SK-N-SH (cell line): ENCODE measurements at regions of chr13 and their contacts with region 1.

Region 1: DNA sequence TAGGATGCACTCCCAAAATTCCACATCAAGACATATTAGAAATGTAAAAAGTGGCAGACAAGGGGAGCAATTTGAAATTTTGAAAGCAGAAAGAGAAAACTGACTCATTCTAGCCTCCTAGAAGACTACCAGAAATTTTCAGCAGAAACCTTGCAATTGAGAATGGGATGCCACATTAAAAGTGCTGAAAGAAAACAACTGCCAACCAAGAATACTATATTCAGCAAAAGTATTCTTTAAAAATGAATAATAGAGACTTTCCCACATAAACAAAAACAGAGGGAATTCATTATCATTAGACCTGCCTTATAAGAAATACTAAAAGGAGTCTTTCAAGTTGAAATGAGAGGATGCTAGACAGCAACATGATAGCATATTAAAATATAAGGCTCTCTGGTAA is 78.3 kb upstream of the HTR2A start:
- DNase-seq: no peak
- H3K4me3 ChIP-seq: no peak overlapping the region
- H3K27ac ChIP-seq: no peak overlapping the region
- H3K4me1 ChIP-seq: no peaks in the 10 kb centered on the region
- H3K27me3 ChIP-seq: no peaks in the 10 kb centered on the region
- CTCF ChIP-seq: no peak
- EP300 ChIP-seq: no peak
- RAD21 ChIP-seq: no peak

Region 2: DNA sequence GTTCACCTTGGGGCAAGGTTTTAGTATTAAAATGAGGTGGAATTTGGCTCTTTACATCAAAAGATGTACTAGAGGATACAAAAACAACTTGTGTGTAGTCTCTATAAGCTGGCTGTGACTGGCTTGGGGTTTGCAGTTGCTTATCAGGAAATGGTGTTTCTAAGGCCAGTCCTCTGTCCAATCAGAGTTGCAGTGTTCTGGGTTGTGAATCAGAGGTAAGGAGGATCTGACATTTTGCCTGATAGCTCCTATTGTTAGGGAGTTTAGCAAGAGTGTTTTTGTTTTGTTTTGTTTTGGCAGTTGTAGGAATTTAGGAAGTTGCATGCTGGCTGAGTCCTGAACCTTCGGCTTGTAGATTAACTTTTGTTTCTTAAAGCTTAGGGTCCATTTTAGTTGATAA is 158.1 kb before region 1 on chr13:
- CTCF ChIA-PET with region 1: no interaction called
- POLR2A ChIA-PET with region 1: no interaction called
- DNase-seq: no peak
- H3K4me3 ChIP-seq: no peak overlapping the region
- H3K27ac ChIP-seq: no peak overlapping the region
- H3K4me1 ChIP-seq: no peaks in the 10 kb centered on the region
- H3K27me3 ChIP-seq: no peaks in the 10 kb centered on the region
- CTCF ChIP-seq: no peak
- EP300 ChIP-seq: no peak
- RAD21 ChIP-seq: no peak

Region 3: GRCh38 chr13:46961719-46962118 is 13.5 kb before region 1 on chr13:
- CTCF ChIA-PET with region 1: interaction called, 14 read pairs
- POLR2A ChIA-PET with region 1: no interaction called
- DNase-seq: no peak
- H3K4me3 ChIP-seq: no peak overlapping the region
- H3K27ac ChIP-seq: peak overlapping the region in 1 of 2 experiments; percentile 56; a peak in 2 of 4 replicates
- H3K4me1 ChIP-seq: peaks cover 0 to 4% of the 10 kb centered on the region in 2 experiments; a peak in 1 of 4 replicates
- H3K27me3 ChIP-seq: no peaks in the 10 kb centered on the region
- CTCF ChIP-seq: no peak
- EP300 ChIP-seq: no peak
- RAD21 ChIP-seq: no peak

Region 4: DNA sequence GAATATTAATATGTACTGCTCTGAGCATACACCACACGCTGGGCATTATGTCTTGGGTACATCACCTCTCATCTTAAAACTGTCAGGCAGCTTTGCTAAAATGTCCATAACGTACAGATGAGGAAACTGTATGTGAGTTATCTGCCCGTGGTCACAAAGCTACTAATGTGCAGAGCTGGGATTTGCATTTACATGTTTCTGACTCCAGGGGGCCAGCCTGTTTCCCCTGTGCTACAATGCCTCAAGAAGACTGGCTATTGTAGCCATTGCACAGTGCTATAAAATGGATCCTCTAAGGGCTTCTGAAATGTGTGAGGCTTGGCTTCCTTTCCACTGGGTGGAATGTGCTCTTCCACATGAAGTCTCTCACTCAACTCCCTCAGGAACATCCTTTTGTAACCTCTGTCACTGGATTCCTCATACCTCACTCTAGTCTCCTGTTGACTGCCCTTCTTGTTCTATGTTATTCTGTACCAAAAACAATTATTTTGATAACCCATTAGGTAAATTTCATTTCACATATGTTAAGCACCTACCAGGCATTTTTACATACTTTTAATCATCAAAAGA is 17.3 kb after region 1 on chr13:
- CTCF ChIA-PET with region 1: interaction called, 11 read pairs
- POLR2A ChIA-PET with region 1: no interaction called
- DNase-seq: no peak
- H3K4me3 ChIP-seq: no peak overlapping the region
- H3K27ac ChIP-seq: no peak overlapping the region
- H3K4me1 ChIP-seq: no peaks in the 10 kb centered on the region; a peak in 1 of 4 replicates
- H3K27me3 ChIP-seq: no peaks in the 10 kb centered on the region
- CTCF ChIP-seq: peak; percentile 47
- EP300 ChIP-seq: no peak
- RAD21 ChIP-seq: peak; percentile 35; the same call in 1 of the 2 replicates

Region 5: DNA sequence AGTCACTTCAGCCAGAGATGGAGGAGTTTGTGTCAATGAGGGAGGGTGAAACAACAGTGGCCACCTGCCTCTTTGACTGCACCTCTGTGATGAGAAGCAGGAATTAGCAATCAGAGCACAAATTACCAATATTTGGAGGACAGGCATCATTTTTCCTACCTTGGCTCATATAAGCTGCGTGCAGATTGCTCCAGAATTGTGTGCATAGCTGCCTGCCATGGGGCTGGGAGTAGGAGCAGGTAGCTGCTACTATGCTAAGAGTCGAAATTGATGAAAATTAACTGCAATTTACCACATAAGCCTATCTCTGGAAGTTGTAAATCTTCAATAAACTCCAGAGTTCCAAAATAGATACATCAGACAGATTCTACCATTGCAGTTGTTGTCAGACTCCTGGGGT is 89.2 kb after region 1 on chr13:
- CTCF ChIA-PET with region 1: no interaction called
- POLR2A ChIA-PET with region 1: no interaction called
- DNase-seq: no peak
- H3K4me3 ChIP-seq: no peak overlapping the region
- H3K27ac ChIP-seq: no peak overlapping the region
- H3K4me1 ChIP-seq: no peaks in the 10 kb centered on the region
- H3K27me3 ChIP-seq: no peaks in the 10 kb centered on the region
- CTCF ChIP-seq: no peak
- EP300 ChIP-seq: no peak
- RAD21 ChIP-seq: no peak

Region 6: DNA sequence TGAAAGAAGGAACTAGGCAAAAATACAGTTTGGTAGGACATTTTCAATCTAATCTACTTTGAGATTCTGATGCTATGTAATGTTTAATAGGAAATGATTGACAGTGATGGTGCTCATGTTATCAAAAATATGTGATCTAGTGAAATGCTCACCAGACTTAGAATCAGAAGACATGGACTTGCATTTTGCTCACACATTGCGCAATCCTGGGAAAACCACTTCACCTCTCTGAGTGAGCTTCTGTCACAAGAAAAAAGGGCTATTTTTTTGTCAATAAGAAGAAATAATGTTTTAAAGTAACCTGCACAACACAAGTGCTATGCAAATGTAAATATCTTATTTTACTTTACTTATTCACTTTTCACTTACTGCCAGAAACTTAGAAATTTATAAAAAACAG is 302.6 kb after region 1 on chr13:
- CTCF ChIA-PET with region 1: no interaction called
- POLR2A ChIA-PET with region 1: no interaction called
- DNase-seq: no peak
- H3K4me3 ChIP-seq: no peak overlapping the region
- H3K27ac ChIP-seq: no peak overlapping the region
- H3K4me1 ChIP-seq: no peaks in the 10 kb centered on the region
- H3K27me3 ChIP-seq: no peaks in the 10 kb centered on the region
- CTCF ChIP-seq: no peak
- EP300 ChIP-seq: no peak
- RAD21 ChIP-seq: no peak

Region 7: DNA sequence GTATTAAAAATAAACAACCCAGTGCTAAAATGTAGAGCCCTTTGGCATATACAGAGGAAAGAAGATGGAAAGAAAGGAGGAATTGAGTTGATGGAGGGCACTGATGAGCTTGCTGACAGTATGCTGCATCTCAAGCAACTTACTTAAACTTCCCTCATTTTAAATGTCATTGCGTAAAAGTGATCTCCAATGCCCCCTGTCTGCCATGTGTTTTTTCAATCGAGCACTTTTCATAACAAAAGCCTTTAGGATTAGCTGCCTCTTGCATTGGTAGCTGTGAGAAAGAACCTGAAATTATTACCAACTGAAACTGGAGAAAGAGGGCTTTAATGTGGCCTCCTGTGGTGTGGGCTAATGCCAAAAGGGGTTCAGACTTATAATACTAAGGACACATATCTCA is 484.3 kb after region 1 on chr13:
- CTCF ChIA-PET with region 1: interaction called, 20 read pairs
- POLR2A ChIA-PET with region 1: no interaction called
- DNase-seq: peak; percentile 3
- H3K4me3 ChIP-seq: no peak overlapping the region
- H3K27ac ChIP-seq: no peak overlapping the region
- H3K4me1 ChIP-seq: no peaks in the 10 kb centered on the region; a peak in 1 of 4 replicates
- H3K27me3 ChIP-seq: no peaks in the 10 kb centered on the region
- CTCF ChIP-seq: peak; percentile 51
- EP300 ChIP-seq: no peak
- RAD21 ChIP-seq: peak; percentile 53